CD14-positive monocyte (primary cell): ENCODE measurements at regions of chr16 and their contacts with region 1.

Region 1: DNA sequence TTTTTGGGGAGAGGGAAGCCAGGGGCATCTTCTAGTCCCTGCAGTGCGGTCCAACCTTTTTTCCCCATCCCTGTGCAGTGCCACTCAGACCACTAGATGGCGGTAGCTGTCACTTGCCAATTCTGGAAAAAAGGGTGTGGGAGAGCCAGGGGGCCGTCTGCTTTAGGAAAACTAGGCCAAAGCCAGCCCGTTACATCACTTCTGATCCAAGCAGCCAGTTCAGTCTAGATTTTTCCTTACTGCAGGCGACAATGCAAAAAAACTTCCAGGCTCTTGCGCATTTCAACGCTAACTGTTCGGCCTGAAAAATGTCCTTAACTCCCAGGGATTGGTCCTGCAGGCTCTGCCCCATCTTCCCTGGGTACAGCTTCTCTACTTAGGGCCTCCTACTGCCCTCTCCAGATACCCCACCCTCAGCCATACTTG is 69.2 kb upstream of the CES5A start:
- DNase-seq: peak; percentile 15 to 39 (median 18)
- H3K4me3 ChIP-seq: no peak overlapping the region
- H3K4me3 Mint-ChIP-seq: no peak overlapping the region
- H3K27ac ChIP-seq: no peak overlapping the region
- H3K27ac Mint-ChIP-seq: no peak overlapping the region
- H3K4me1 ChIP-seq: no peaks in the 10 kb centered on the region
- H3K4me1 Mint-ChIP-seq: no peaks in the 10 kb centered on the region
- H3K27me3 ChIP-seq: peaks cover 0 to 4% of the 10 kb centered on the region in 2 donors
- H3K27me3 Mint-ChIP-seq: peaks cover 2 to 19% (median 10%) of the 10 kb centered on the region in 3 donors
- CTCF ChIP-seq: peak; percentile 93

Region 2: DNA sequence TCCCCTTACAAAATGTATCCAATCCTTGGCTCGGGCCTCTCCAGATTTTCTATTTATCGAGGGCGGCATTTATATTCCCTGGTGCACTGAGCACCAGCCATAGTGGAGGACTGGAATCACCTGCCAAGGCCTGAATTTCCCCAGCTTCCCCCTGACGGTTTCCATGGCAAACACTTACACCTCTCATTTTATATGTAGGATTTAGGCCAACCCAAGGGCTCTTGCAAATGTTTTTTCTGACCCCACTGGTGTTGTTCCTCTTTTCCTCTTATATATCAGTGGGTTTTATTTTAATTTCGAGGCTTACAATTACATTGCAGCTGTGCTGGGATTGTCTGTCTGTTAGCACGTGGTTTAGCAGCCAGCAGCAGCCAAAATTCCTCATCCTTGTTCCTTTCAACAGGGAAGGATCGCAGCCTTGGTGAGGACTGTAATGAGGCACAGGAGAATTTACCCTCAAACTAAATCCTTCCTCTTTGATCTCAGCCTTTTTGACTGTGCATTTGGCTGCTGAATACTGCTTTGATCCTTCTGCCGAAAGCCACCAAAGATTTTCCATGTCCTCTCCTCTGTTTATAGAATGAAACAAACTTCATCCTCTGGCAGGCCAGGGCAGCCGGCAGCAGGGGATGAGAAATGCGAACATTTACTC is 42.7 kb before region 1 on chr16:
- intact Hi-C with region 1: no loop called
- DNase-seq: no peak
- H3K4me3 ChIP-seq: no peak overlapping the region
- H3K4me3 Mint-ChIP-seq: no peak overlapping the region
- H3K27ac ChIP-seq: no peak overlapping the region
- H3K27ac Mint-ChIP-seq: no peak overlapping the region
- H3K4me1 ChIP-seq: no peaks in the 10 kb centered on the region
- H3K4me1 Mint-ChIP-seq: no peaks in the 10 kb centered on the region
- H3K27me3 ChIP-seq: no peaks in the 10 kb centered on the region
- H3K27me3 Mint-ChIP-seq: peaks cover 0 to 4% (median 2%) of the 10 kb centered on the region in 3 donors
- CTCF ChIP-seq: no peak

Region 3: DNA sequence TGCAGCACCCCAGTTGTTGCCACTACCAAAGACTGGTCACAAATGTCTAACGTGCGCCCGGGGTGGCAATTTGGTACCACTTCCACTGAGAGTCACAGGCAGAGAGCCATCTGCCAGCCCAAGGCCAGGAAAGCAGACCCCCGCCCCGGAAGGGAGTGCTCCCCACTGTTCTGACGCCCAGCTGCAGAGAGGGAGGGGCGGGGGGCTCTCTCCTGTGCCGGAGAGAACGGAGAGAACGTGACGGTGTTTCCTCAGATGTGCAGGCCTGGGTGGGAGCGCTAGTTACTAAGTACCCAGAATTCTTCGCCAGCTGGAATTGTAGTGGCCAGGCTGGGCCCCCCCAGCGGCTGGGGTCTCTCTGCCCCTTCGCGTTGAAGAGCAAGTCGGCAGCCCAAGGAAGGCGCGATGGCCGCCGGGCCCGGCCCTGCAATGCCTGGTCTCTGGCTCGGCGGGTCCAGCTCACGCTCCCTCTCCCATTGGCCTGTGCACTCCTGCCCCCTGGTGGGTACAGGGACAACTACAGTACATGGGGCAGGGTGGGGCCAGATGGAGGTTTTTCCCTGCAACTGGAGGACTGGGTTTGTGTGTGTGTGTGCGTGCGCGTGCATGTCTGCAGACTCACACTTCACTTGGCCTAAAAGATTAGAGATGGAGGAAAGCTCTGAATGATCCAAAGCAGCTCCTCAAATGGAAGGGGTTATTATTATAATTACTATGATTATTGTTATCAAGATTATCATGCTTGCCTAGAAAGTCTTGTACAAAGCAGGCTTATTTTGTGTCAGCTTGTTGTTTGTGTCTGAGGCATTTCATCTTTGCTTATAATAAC is 373.8 kb after region 1 on chr16:
- intact Hi-C with region 1: loop called (anchors 1 to 2 kb)
- DNase-seq: peak; percentile 58 to 65 (median 60)
- H3K4me3 ChIP-seq: peak overlapping the region in 1 of 3 experiments; percentile 47
- H3K4me3 Mint-ChIP-seq: peak overlapping the region; percentile 61 to 78
- H3K27ac ChIP-seq: no peak overlapping the region
- H3K27ac Mint-ChIP-seq: no peak overlapping the region
- H3K4me1 ChIP-seq: peaks cover 5 to 6% of the 10 kb centered on the region in 2 donors
- H3K4me1 Mint-ChIP-seq: peaks cover 8% of the 10 kb centered on the region
- H3K27me3 ChIP-seq: peaks cover 0 to 6% of the 10 kb centered on the region in 2 donors
- H3K27me3 Mint-ChIP-seq: peaks cover 6 to 16% (median 16%) of the 10 kb centered on the region in 3 donors
- CTCF ChIP-seq: peak; percentile 90